Gastrocnemius medialis (tissue), 4 donors: ENCODE measurements at regions of chr12 and their contacts with region 1.

Region 1: DNA sequence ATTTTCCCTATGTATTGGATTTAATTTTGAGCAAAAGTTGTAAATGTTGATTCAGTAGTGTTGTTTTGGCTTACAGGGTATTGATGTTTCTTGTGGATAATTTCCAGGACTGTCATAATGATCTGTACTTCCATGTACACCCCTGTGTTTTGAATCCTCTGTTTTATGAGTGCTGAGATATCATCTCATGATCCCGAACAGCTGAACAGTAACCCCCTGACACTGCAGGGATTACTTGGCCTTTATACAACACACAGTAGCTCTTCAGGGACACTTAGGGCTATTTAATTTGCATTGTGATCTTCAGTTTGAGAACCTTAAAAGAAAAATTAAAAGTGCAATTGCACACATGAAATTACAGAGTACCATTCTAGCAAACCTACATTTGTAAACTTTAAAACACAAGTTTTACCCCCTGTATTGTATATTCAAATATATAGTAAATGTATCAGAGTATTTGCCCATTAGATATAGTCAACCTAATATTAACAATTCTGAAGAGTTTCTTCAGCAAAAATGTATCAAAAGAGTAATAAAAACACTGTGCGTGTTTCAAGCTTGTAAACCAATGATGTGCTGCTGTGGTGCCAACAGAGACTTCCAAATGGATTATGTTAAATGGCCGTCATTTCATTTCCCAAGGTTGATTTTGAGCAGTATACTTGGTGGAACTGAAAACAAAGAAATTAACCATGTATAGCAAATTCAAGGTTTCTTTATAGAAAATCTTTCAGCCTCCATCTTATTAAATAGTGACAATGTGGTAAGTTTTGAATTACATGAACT is 27.9 kb upstream of the MYF6 start:
- DNase-seq: no peak
- ATAC-seq: peak; percentile 47 to 55
- H3K4me3 ChIP-seq: peak overlapping the region in 2 of 4 donors; percentile 11 to 29
- H3K27ac ChIP-seq: peak overlapping the region; percentile 52 to 84 (median 82)
- H3K4me1 ChIP-seq: peaks cover 60 to 63% of the 10 kb centered on the region in 2 donors
- H3K27me3 ChIP-seq: no peaks in the 10 kb centered on the region
- CTCF ChIP-seq: no peak
- POLR2A ChIP-seq: no peak

Region 2: DNA sequence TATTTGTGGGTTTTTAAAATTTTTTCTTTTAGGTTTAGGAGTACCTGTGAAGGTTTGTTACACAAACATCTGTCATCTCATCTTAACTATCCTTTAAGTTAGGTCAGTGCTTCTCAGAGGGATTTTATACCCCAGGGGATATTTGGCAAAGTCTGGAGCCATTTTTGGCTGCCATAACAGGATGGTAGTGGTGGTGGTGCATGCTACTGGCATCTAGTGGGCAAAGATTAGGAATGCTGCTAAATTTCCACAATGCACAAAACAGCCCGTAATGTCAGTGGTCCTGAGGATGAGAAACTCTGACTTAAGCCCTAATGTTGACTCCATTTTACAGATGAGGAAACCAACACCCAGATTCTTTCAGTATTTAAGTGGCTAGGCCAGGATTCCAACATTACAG is 57.3 kb before region 1 on chr12:
- in situ Hi-C with region 1: loop called in 1 of 4 experiments (anchors 10 kb)
- intact Hi-C with region 1: loop called (anchors 5 kb)
- DNase-seq: no peak
- ATAC-seq: no peak
- H3K4me3 ChIP-seq: no peak overlapping the region
- H3K27ac ChIP-seq: no peak overlapping the region
- H3K4me1 ChIP-seq: peaks cover 12 to 19% of the 10 kb centered on the region in 2 donors
- H3K27me3 ChIP-seq: no peaks in the 10 kb centered on the region
- CTCF ChIP-seq: no peak
- POLR2A ChIP-seq: no peak

Region 3: GRCh38 chr12:80627782-80628181 is 51.8 kb before region 1 on chr12:
- in situ Hi-C with region 1: loop called in 1 of 4 experiments (anchors 10 kb)
- intact Hi-C with region 1: loop called (anchors 5 kb)
- DNase-seq: no peak
- ATAC-seq: peak; percentile 91 to 94
- H3K4me3 ChIP-seq: no peak overlapping the region
- H3K27ac ChIP-seq: peak overlapping the region; percentile 56 to 74 (median 64)
- H3K4me1 ChIP-seq: peaks cover 31 to 35% of the 10 kb centered on the region in 2 donors
- H3K27me3 ChIP-seq: no peaks in the 10 kb centered on the region
- CTCF ChIP-seq: no peak
- POLR2A ChIP-seq: no peak